ENCODE measurements at regions of chr5 and their contacts with region 1.

Region 1: DNA sequence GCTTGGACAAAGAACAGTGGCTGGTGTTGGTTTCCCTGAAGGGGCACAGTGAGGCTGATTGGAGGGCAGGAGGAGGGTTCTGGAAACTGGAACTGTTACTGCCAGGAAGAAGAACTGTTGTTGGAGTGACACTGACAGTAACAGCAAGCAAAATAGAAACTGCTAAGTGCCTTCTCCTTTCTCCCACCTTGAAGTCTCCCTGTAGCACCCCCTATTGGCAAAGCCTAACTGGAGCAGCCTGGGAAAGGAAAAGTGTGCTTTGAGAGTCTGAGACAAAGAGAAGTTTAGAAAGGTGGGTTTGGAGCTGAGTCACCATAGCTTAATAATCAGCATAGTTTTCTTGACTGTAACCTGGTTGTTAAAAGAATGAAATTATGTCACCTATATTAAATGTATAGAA is 2.5 kb upstream of the TMEM174 start:
- DNase-seq: no peak
- H3K4me3 ChIP-seq: no peak overlapping the region
- H3K27ac ChIP-seq: no peak overlapping the region
- H3K4me1 ChIP-seq: peaks cover 4% of the 10 kb centered on the region
- H3K27me3 ChIP-seq: peaks cover 8% of the 10 kb centered on the region
- CTCF ChIP-seq: peak; percentile 61 to 66

Region 2: GRCh38 chr5:73115399-73116051 is 55.0 kb before region 1 on chr5:
- CTCF ChIA-PET with region 1: no interaction called
- dilution Hi-C with region 1: loop called (anchors 10 kb)
- in situ Hi-C with region 1: no loop called
- intact Hi-C with region 1: no loop called
- DNase-seq: peak; percentile 67
- H3K4me3 ChIP-seq: no peak overlapping the region
- H3K27ac ChIP-seq: no peak overlapping the region
- H3K4me1 ChIP-seq: peaks cover 26% of the 10 kb centered on the region
- H3K27me3 ChIP-seq: no peaks in the 10 kb centered on the region
- CTCF ChIP-seq: no peak

Region 3: DNA sequence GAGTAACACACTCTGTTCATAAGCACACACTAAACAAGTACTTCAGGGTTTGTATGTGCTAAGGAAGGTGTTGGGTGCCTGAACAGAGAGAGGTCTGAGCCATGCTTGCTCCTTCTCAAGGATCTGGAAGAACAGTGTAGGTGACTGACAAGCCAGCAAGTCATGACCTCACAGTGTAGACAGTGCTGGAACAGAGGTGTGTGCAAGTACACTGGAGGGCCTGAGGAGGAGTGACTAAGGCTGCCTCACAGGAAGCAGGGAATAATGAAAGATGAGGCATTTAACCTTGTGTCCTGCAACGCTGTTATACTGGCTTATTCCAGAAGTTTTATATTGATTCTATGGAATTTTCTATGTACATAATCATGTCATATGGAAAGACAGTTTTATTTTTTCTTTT is 86.3 kb after region 1 on chr5:
- CTCF ChIA-PET with region 1: no interaction called
- dilution Hi-C with region 1: loop called (anchors 10 kb)
- in situ Hi-C with region 1: no loop called
- intact Hi-C with region 1: no loop called
- DNase-seq: peak; percentile 83
- H3K4me3 ChIP-seq: no peak overlapping the region
- H3K27ac ChIP-seq: no peak overlapping the region
- H3K4me1 ChIP-seq: peaks cover 5% of the 10 kb centered on the region
- H3K27me3 ChIP-seq: no peaks in the 10 kb centered on the region
- CTCF ChIP-seq: no peak

Measured in mammary epithelial cell (primary cell).